Naive thymus-derived CD4-positive, alpha-beta T cell (primary cell): ENCODE measurements at regions of chr11 and their contacts with region 1.

Region 1: DNA sequence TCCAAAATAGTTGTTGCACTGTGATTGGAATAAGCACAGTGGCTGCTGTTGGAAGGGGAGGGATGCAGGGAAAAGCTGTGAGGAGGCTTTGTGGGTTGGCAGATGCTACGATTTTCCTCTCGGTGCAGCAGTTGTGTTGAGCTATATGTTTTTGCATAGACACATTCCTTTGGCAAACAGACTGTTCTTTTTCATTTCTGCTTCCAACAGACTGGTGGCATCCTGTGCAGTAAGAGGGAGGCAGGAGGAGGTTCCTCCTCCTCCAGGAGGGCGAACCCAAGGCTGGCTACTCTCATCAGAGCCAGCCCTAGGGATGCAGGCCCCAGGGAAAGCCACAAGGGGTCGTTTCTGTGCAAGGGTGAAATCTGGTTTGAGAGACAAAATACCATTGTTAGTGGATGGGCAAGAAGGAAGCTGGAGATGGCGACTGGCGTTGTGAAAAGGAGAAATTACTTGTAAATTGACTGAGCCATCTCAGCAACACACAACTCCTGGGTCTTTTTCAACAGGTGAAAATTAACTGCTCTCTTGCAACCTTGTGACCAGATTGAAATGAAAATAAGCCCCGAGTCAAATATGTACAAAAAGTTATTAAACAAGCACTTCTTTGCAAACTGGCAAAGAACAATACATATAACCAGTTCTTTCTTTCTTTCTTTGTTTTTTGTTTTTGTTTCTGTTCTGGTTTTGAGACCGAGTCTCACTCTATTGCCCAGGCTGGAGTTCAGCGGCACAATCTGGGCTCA is 26.5 kb upstream of the UBASH3B start:
- DNase-seq: peak; percentile 46 to 70 (median 62)
- ATAC-seq: peak; percentile 93
- H3K4me3 ChIP-seq: no peak overlapping the region
- H3K4me3 Mint-ChIP-seq: no peak overlapping the region
- H3K27ac ChIP-seq: no peak overlapping the region
- H3K27ac Mint-ChIP-seq: peak overlapping the region in 4 of 9 donors; percentile 18 to 49 (median 24)
- H3K4me1 ChIP-seq: no peaks in the 10 kb centered on the region
- H3K4me1 Mint-ChIP-seq: peaks cover 0 to 30% (median 16%) of the 10 kb centered on the region in 7 donors
- H3K27me3 ChIP-seq: no peaks in the 10 kb centered on the region
- H3K27me3 Mint-ChIP-seq: peaks cover 0 to 16% (median 0%) of the 10 kb centered on the region in 5 donors

Region 2: DNA sequence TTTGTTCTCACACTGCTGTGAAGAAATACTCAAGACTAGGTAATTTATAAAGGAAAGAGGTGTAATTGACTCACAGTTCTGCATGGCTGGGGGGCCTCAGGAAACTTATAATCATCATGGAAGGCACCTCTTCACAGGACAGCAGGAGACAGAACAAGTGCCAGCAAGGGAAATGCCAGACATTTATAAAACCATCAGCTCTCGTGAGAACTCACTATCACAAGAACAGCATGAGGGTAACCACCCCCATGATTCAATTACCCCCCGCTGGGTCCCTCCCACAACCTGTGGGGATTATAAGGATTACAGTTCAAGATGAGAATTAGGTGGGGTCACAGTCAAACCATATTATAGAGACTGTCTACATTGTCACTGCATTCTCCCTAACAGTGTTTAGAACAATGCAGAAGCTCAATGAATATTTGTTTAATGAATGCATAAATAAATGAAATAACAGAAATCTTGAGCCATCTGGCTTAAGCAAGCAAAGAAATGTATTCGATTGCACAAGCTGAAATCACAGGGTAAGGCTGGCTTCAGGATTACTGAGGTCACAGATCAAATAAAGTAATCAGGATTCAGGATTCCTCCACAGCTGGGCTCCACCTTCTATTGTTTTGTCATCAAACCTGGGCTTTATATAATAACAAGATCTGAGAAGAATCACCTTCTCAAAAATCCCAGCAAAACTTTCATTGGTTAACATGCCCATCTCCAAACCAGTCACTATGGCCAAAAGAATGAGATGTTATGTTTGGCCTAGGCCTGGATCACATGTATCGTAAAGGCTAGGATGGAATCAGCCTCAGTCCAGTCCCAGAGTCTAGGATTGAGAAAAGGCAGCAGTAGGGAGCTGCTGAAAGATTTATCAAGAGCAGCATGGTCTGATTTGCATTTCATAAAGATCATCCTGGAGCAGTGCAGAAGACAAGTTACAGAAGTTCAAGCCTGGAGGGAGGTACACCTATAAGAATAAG is 111.3 kb before region 1 on chr11:
- CTCF ChIA-PET with region 1: no interaction called
- POLR2A ChIA-PET with region 1: no interaction called
- intact Hi-C with region 1: no loop called
- DNase-seq: no peak
- ATAC-seq: no peak
- H3K4me3 ChIP-seq: no peak overlapping the region
- H3K4me3 Mint-ChIP-seq: no peak overlapping the region
- H3K27ac ChIP-seq: no peak overlapping the region
- H3K27ac Mint-ChIP-seq: no peak overlapping the region
- H3K4me1 ChIP-seq: no peaks in the 10 kb centered on the region
- H3K4me1 Mint-ChIP-seq: no peaks in the 10 kb centered on the region
- H3K27me3 ChIP-seq: no peaks in the 10 kb centered on the region
- H3K27me3 Mint-ChIP-seq: peaks cover under 1 to 29% (median 17%) of the 10 kb centered on the region in 5 donors

Region 3: GRCh38 chr11:122578168-122578825 is 50.7 kb before region 1 on chr11:
- CTCF ChIA-PET with region 1: interaction called, 4 read pairs
- POLR2A ChIA-PET with region 1: no interaction called
- intact Hi-C with region 1: loop called in 1 of 2 experiments (anchors 1 kb)
- DNase-seq: no peak
- ATAC-seq: no peak
- H3K4me3 ChIP-seq: no peak overlapping the region
- H3K4me3 Mint-ChIP-seq: no peak overlapping the region
- H3K27ac ChIP-seq: no peak overlapping the region
- H3K27ac Mint-ChIP-seq: no peak overlapping the region
- H3K4me1 ChIP-seq: no peaks in the 10 kb centered on the region
- H3K4me1 Mint-ChIP-seq: peaks cover 5 to 17% (median 11%) of the 10 kb centered on the region in 7 donors
- H3K27me3 ChIP-seq: no peaks in the 10 kb centered on the region
- H3K27me3 Mint-ChIP-seq: peaks cover 0 to 7% (median 0%) of the 10 kb centered on the region in 5 donors